ENCODE measurements at regions of chr1 and their contacts with region 1.

Region 1: DNA sequence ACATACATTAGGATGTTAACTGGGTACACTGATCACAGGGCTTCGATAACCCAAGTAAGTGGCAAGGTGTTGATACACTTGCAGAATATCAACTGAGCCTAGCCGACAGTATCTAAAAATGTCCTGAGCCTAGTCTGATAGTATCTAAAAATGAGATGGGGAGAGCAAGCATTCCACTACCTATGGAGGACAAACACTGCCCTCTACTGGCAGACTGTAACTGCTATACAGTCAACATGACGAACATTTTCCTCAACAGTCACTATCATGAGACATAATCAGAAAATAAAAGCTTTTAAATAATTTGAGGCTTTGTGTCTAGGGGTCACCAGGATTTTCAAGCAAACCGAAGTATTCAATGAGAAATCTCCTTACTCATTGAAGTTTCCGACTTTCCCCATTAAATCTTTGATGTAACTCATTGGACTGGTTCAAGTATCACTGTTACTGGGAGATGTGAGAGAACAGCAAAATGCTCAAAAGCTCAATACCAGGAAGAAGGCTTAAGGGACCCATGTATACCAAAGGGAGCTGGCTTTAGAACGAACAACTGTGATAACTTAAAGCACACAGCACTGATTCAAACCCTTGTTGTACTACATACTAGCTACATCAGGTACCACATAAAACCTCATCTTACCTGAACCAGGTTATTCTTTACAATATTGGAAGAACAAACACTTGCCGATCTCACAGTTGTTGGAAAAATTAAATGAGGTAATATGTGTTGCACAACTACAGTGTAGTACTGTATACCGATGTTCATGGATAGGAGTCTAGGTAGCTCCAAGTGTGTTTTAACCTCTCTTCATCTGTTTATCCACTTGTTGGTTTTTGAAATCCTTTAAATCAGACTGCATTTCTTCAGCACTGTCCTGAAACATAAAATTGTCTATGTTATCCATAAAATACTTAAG is 31.1 kb upstream of the SLC45A3 start:
- DNase-seq: peak; percentile 82
- H3K4me3 ChIP-seq: no peak overlapping the region
- H3K27ac ChIP-seq: no peak overlapping the region
- H3K4me1 ChIP-seq: no peaks in the 10 kb centered on the region
- H3K27me3 ChIP-seq: no peaks in the 10 kb centered on the region
- CTCF ChIP-seq: peak; percentile 94

Region 2: DNA sequence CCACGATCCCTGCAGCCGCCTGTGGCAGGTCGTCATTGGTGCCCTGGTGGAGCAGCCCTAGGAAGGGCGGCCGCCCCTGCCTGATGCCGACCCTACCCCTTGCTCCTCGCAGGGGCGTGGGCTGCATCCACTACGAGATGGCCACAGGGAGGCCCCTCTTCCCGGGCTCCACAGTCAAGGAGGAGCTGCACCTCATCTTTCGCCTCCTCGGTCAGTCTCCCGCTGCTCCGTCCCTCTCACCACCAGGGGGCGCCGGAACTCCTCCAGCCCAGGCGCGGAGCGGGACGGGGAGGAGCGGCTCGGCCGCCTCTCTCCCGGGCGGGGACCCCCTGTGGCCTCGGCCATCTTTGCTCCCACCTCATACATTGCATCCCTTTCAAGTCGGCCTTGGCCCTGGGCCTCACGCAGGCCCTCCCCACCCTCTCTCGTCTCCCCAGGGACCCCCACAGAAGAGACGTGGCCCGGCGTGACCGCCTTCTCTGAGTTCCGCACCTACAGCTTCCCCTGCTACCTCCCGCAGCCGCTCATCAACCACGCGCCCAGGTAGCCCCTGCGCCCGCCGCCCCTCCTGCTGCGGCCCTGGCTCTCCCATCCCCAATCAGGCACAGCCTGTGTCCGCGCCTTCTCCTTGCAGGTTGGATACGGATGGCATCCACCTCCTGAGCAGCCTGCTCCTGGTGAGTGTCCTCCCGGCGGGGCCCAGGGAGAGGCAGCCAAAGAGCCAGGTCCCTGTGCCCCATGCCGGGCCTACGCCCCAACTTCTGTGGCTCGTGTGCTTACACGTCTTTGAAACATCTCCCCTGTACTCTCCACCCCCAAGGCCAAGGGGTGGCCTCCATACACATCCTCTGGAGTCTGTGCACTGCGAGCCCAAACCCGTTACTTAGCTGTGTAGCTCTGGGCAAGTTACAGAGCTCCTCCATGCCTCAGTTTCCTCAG is 182.2 kb before region 1 on chr1:
- CTCF ChIA-PET with region 1: no interaction called
- POLR2A ChIA-PET with region 1: interaction called, 3 read pairs
- intact Hi-C with region 1: loop called (anchors 2 kb)
- DNase-seq: peak; percentile 91
- H3K4me3 ChIP-seq: peak overlapping the region; percentile 32
- H3K27ac ChIP-seq: no peak overlapping the region
- H3K4me1 ChIP-seq: peaks cover 13% of the 10 kb centered on the region
- H3K27me3 ChIP-seq: no peaks in the 10 kb centered on the region
- CTCF ChIP-seq: peak; percentile 97